AG04450 (cell line): ENCODE measurements at regions of chr17 and their contacts with region 1.

Region 1: DNA sequence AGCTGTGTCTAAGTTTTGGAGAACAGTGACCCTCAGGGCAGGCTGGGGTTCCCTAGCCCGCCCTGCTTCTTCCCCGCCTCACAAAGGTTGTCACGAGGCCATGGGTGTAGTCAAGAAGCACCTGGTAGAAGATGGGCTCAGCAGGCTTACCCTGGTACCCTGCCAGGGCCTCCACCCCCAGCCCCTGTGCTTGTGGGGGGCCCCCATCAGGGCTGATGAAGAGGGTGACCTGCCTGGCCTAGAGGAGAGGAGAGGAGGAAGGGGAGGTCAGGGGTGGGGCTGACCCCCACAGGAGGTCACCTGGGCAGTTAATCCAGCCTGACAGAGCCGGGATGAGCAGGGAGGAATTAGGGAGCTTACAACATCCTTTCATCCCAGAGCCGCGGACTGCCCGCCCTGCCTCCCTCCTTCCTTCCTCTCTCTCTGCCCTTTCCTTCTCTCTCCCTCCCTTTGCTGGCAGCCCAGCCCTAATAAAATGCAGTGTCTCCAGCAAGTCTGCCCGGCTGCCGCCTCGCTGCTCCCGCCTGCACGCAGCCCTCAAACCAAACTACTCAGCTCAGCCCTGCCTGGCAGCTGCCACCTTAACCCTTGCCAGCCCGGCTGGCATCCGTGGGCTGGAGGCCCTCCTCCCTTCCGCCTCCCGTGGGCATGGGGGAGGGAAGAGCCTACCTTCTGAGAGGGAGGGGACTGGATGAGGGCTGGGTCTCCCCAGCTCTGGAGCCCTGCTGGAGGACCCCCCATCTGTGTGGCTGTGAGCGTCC is 7.2 kb downstream of the DLX3 start:
- DNase-seq: no peak
- H3K4me3 ChIP-seq: no peak overlapping the region
- H3K27ac ChIP-seq: no peak overlapping the region
- H3K27me3 ChIP-seq: peaks cover 84% of the 10 kb centered on the region
- CTCF ChIP-seq: no peak

Region 2: DNA sequence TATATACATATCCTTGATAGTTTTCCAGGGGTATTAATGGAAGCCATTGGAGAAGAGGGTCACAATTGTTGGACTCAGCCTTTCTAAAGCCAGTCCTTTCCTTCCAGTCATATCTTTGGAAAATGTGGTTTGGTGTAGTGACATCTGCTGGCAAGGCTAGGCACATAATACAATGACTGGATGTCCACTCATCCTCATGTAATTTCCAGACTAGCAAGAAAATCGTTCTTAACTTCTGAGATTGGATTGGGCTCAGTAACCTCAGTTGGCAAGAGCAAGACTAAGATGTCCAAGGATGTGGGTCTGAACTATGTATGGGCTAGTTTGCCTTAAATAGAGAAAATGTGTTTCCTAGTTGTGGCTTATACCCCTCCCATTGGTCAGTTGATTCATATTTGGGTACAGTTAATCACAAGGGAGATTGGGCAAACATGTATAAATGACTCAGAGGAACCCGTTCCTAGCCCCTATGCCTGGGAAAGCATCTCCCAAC is 208.1 kb before region 1 on chr17:
- CTCF ChIA-PET with region 1: no interaction called
- POLR2A ChIA-PET with region 1: no interaction called
- DNase-seq: peak; percentile 23
- H3K4me3 ChIP-seq: no peak overlapping the region
- H3K27ac ChIP-seq: no peak overlapping the region
- H3K27me3 ChIP-seq: peaks cover 7% of the 10 kb centered on the region
- CTCF ChIP-seq: peak; percentile 61

Region 3: DNA sequence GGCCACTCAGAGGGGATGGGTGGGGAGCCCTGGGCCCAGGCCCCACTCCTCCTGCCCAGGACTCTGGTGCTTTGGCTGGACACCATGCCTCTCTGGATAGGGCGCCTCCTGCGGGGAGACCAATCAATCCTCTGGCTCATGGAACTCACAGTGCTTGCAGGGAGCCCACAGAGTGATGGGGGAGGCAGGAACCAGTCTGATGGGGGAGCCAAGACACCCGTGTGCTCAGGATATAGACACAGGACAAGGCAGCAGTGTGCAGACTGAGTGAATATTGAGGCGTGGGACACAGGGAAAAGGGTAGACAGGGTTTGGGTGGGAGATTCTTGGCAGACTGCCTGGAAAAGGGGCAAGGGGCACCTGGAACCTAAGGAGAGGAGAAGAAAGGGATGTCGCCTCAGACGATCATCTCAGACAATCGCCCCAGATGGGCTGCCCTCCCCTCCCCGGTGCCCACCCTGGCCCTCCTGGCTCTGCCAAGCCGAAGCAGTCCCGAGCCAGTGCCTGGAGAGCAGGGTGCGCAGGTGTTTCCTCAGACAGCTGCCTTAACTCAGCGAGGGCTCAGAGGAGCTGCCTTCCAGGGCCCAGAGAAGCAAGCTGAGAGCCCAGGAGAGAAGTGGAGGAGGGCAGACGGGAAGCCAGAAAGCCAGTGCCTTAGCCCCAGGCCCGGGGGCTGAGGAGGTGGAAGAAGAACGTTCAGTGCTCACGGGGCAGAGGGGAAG is 56.3 kb before region 1 on chr17:
- CTCF ChIA-PET with region 1: interaction called, 10 read pairs
- POLR2A ChIA-PET with region 1: no interaction called
- DNase-seq: no peak
- H3K4me3 ChIP-seq: no peak overlapping the region
- H3K27ac ChIP-seq: no peak overlapping the region
- H3K27me3 ChIP-seq: peaks cover 67% of the 10 kb centered on the region
- CTCF ChIP-seq: no peak

Region 4: DNA sequence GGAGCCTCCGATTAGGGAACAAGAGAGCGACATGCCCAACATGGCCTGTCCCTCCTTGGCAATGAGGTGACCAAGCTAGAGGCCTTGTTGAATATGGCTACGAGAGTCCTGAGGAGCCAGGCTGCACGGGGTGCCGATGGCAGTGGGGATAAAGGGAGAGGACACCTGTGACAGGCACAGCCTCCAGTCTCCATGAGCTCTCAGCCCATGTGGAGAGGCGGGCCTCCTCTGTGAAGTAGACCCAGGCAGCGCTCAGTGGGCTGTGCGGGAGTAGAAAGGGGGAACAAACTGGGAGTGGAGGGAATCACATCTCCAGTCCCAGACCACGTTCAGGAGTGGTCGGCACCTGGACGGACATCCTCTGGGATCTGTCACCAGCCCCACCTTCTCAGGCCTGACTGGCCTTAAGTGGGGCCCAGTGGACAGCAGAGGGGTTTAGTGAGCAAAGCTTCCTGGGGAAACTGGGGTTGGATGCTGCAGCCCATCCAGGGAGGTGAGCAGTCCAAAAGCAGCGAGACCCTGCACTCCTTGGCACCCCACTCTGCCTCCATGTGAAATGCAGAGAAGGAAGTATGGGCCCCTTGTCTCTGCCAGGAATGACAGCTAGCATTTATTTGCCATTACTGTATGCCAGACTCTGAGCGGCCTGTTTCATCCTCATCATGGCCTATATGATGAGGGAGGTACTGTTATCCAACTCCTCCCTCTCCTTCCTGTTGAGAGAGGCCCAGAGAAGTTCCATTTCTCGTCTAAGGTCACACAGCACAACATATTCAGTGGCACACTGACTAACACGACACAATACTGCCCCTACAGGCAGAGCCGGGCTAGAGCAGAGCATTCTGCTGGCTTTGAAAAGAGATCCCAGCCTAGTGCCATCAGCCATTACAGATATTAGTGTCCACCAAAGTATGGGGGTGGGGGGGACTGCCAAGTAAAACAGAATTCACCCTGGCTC is 281.9 kb after region 1 on chr17:
- CTCF ChIA-PET with region 1: no interaction called
- POLR2A ChIA-PET with region 1: no interaction called
- DNase-seq: peak; percentile 48
- H3K4me3 ChIP-seq: peak overlapping the region; percentile 57
- H3K27ac ChIP-seq: peak overlapping the region; percentile 91
- H3K27me3 ChIP-seq: no peaks in the 10 kb centered on the region
- CTCF ChIP-seq: peak; percentile 87